Caco-2 (cell line): ENCODE measurements at regions of chr15 and their contacts with region 1.

Region 1: DNA sequence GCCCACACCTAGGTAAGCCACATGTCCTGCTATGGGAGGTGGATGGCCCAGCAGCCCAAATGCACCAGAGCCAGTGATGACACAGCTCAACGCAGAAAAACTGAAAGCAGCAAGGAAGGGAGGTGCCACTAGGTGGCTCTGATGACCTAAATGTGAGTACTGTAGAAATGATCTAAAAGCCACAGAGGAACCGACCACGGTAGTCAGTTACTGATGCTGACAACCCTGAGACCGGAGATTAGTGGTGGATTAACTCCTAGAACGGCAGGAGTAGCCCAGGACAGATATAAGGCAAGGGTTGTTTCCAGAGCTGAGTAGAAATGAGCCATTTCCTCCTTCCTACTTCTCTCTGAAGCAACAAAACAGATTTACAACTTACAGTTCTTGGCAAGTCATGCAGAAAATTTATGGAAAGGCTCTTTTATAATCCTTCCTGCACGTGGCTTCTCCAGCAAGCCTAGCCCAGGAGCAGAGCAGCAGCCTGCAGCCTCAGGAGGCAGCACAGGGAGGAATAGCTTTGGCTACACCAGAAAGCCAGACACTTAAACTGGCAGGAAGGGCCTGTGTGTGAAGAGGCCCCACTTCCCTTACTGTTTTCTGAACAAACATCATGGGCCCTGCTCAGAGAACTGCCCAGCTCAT is 13.1 kb downstream of the FBXL22 start:
- DNase-seq: peak; percentile 76
- H3K4me3 ChIP-seq: no peak overlapping the region
- H3K4me3 Mint-ChIP-seq: no peak overlapping the region
- H3K27ac Mint-ChIP-seq: no peak overlapping the region
- H3K4me1 ChIP-seq: peaks cover 6% of the 10 kb centered on the region; the same call in 1 of the 2 replicates
- H3K4me1 Mint-ChIP-seq: peaks cover 10% of the 10 kb centered on the region
- H3K27me3 ChIP-seq: no peaks in the 10 kb centered on the region
- H3K27me3 Mint-ChIP-seq: no peaks in the 10 kb centered on the region
- CTCF ChIP-seq: peak; percentile 79 to 85

Region 2: GRCh38 chr15:63655683-63656372 is 45.5 kb after region 1 on chr15:
- CTCF ChIA-PET with region 1: no interaction called
- POLR2A ChIA-PET with region 1: no interaction called
- intact Hi-C with region 1: loop called (anchors 2 kb)
- DNase-seq: no peak
- H3K4me3 ChIP-seq: no peak overlapping the region
- H3K4me3 Mint-ChIP-seq: no peak overlapping the region
- H3K27ac Mint-ChIP-seq: no peak overlapping the region
- H3K4me1 ChIP-seq: no peaks in the 10 kb centered on the region
- H3K4me1 Mint-ChIP-seq: no peaks in the 10 kb centered on the region
- H3K27me3 ChIP-seq: no peaks in the 10 kb centered on the region
- H3K27me3 Mint-ChIP-seq: no peaks in the 10 kb centered on the region
- CTCF ChIP-seq: no peak

Region 3: GRCh38 chr15:63891079-63891767 is 280.9 kb after region 1 on chr15:
- CTCF ChIA-PET with region 1: no interaction called
- POLR2A ChIA-PET with region 1: no interaction called
- intact Hi-C with region 1: loop called (anchors 1 kb)
- DNase-seq: peak; percentile 81 to 86
- H3K4me3 ChIP-seq: no peak overlapping the region
- H3K4me3 Mint-ChIP-seq: no peak overlapping the region
- H3K27ac Mint-ChIP-seq: no peak overlapping the region
- H3K4me1 ChIP-seq: peaks cover under 1% of the 10 kb centered on the region
- H3K4me1 Mint-ChIP-seq: no peaks in the 10 kb centered on the region
- H3K27me3 ChIP-seq: no peaks in the 10 kb centered on the region
- H3K27me3 Mint-ChIP-seq: no peaks in the 10 kb centered on the region
- CTCF ChIP-seq: peak; percentile 82 to 86

Region 4: DNA sequence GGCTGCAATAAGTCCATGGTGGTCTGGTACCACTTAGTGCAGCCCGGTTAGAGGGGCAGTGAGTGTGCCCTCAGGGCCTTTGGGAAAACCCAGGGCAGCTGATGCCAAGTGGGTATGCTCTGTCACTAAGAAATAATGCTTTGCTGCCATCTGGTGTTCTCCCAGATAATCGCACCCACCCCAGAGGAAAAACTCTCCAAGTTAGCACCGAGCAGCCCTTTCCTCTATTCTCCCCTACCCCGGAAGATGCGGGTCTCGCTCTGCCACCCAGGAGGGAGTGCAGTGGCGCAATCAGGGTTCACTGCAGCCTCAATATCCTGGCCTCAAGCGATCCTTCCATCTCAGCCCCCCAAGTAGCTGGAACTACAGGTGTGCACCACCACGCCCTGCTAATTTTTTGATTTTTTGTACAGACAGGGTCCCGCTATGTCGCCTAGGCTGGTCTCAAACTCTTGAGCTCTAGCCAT is 457.3 kb after region 1 on chr15:
- CTCF ChIA-PET with region 1: interaction called, 4 read pairs
- POLR2A ChIA-PET with region 1: no interaction called
- intact Hi-C with region 1: loop called (anchors 2 kb)
- DNase-seq: peak; percentile 58 to 77
- H3K4me3 ChIP-seq: no peak overlapping the region
- H3K4me3 Mint-ChIP-seq: no peak overlapping the region
- H3K27ac Mint-ChIP-seq: no peak overlapping the region
- H3K4me1 ChIP-seq: peaks cover 19% of the 10 kb centered on the region
- H3K4me1 Mint-ChIP-seq: peaks cover 5% of the 10 kb centered on the region
- H3K27me3 ChIP-seq: no peaks in the 10 kb centered on the region
- H3K27me3 Mint-ChIP-seq: no peaks in the 10 kb centered on the region
- CTCF ChIP-seq: peak; percentile 66 to 77